Uterus (tissue), 4 donors: ENCODE measurements at regions of chr1 and their contacts with region 1.

Region 1: GRCh38 chr1:235415008-235415904 is 48.0 kb downstream of the TBCE start:
- DNase-seq: peak; percentile 43 to 53
- H3K4me3 ChIP-seq: no peak overlapping the region
- H3K27ac ChIP-seq: no peak overlapping the region
- H3K4me1 ChIP-seq: no peaks in the 10 kb centered on the region
- H3K27me3 ChIP-seq: no peaks in the 10 kb centered on the region
- CTCF ChIP-seq: peak; percentile 58 to 69 (median 64)
- POLR2A ChIP-seq: no peak

Region 2: GRCh38 chr1:235100194-235100772 is 315.0 kb before region 1 on chr1:
- intact Hi-C with region 1: loop called (anchors 5 kb)
- DNase-seq: no peak
- H3K4me3 ChIP-seq: no peak overlapping the region
- H3K27ac ChIP-seq: peak overlapping the region in 1 of 2 donors; percentile 16
- H3K4me1 ChIP-seq: no peaks in the 10 kb centered on the region
- H3K27me3 ChIP-seq: no peaks in the 10 kb centered on the region
- CTCF ChIP-seq: no peak
- POLR2A ChIP-seq: no peak

Region 3: DNA sequence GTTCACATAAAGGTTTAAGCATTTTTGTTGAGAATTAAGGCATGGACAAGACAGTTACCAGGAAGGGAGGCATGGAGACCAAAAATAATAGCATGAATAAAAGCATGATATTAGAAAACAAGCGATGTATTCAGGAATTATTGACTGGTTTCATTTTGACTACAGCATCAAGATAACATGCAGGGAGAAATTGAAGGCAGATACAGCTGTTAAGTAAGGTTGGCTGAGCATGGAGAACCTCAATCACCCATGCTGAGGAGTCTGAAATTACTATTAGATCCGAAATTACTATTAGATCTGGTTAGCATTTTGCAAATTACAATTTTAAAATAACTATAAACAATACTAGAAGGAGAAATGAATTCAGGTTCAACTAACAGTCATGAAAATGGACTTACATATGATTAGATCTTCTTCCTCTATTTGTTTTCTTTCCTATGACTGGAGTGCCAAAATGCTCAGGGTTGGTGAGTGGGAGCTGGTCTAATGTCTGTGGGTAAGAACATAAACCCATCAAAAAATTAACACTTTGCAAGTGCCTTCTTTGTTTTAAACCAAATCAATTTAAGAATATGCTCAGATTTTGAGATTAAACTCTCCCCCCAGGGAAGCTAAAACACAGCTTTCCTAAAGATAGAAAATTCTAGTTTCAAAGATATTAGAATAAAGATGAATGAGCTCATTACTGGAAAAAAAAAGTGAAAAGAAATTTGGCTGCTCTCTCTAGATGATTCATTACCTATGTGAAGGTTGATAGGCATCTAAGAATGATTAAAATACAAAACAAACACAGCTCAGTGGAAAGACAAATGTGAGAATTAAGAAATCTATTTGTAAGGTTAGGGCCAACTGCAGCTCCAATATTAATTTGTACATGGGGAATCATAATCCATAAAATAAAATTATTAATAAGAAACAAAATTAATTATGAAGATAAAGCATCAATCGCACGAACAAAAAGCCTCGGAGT is 168.9 kb before region 1 on chr1:
- intact Hi-C with region 1: loop called (anchors 10 kb)
- DNase-seq: no peak
- H3K4me3 ChIP-seq: no peak overlapping the region
- H3K27ac ChIP-seq: no peak overlapping the region
- H3K4me1 ChIP-seq: no peaks in the 10 kb centered on the region
- H3K27me3 ChIP-seq: no peaks in the 10 kb centered on the region
- CTCF ChIP-seq: no peak
- POLR2A ChIP-seq: no peak

Region 4: GRCh38 chr1:235527196-235527814 is 112.0 kb after region 1 on chr1:
- intact Hi-C with region 1: no loop called
- DNase-seq: no peak
- H3K4me3 ChIP-seq: no peak overlapping the region
- H3K27ac ChIP-seq: no peak overlapping the region
- H3K4me1 ChIP-seq: no peaks in the 10 kb centered on the region
- H3K27me3 ChIP-seq: no peaks in the 10 kb centered on the region
- CTCF ChIP-seq: no peak
- POLR2A ChIP-seq: no peak